HepG2 (cell line): ENCODE measurements at regions of chr4 and their contacts with region 1.

Region 1: GRCh38 chr4:189385098-189385497 is 555.6 kb upstream of the FRG1 start:
- DNase-seq: peak; percentile 79
- ATAC-seq: peak; percentile 77
- H3K4me3 ChIP-seq: no peak overlapping the region; a peak in 1 of 6 replicates
- H3K27ac ChIP-seq: peak overlapping the region; percentile 13
- H3K4me1 ChIP-seq: peaks cover 25% of the 10 kb centered on the region
- H3K27me3 ChIP-seq: no peaks in the 10 kb centered on the region
- CTCF ChIP-seq: no peak
- EP300 ChIP-seq: peak in 1 of 2 experiments; percentile 45; a peak in 2 of 4 replicates
- POLR2A ChIP-seq: no peak
- RAD21 ChIP-seq: no peak

Region 2: GRCh38 chr4:189255636-189256035 is 129.5 kb before region 1 on chr4:
- CTCF ChIA-PET with region 1: no interaction called
- POLR2A ChIA-PET with region 1: no interaction called
- in situ Hi-C with region 1: no loop called
- intact Hi-C with region 1: no loop called
- DNase-seq: no peak
- ATAC-seq: no peak
- H3K4me3 ChIP-seq: no peak overlapping the region
- H3K27ac ChIP-seq: no peak overlapping the region
- H3K4me1 ChIP-seq: no peaks in the 10 kb centered on the region
- H3K27me3 ChIP-seq: no peaks in the 10 kb centered on the region
- CTCF ChIP-seq: no peak
- EP300 ChIP-seq: no peak
- POLR2A ChIP-seq: no peak
- RAD21 ChIP-seq: no peak

Region 3: DNA sequence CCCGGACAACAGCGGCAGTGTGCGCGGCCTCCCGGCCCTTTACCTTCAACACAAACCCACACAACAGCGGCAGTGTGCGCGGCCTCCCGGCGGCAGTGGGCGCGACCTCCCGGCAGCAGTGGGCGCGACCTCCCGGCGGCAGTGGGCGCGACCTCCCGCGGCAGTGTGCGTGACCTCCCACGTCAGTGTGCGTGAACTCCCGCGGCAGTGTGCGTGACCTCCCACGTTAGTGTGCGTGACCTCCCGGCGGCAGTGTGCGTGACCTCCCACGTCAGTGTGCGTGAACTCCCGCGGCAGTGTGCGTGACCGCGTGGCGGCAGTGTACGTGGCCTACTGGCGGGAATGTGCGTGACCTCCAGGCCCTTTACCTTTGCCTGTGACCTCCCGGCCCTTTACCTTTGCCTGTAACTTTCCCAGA is 21.1 kb before region 1 on chr4:
- CTCF ChIA-PET with region 1: no interaction called
- POLR2A ChIA-PET with region 1: no interaction called
- in situ Hi-C with region 1: no loop called
- intact Hi-C with region 1: loop called (anchors 2 kb)
- DNase-seq: peak; percentile 56
- ATAC-seq: peak; percentile 99
- H3K4me3 ChIP-seq: peak overlapping the region in 2 of 3 experiments; percentile 58 to 64; a peak in 5 of 6 replicates
- H3K27ac ChIP-seq: peak overlapping the region; percentile 54
- H3K4me1 ChIP-seq: peaks cover 11% of the 10 kb centered on the region
- H3K27me3 ChIP-seq: no peaks in the 10 kb centered on the region
- CTCF ChIP-seq: peak; percentile 42; the same call in 1 of the 2 replicates
- EP300 ChIP-seq: no peak
- POLR2A ChIP-seq: peak; percentile 38 to 54; a peak in 2 of 4 replicates
- RAD21 ChIP-seq: no peak

Region 4: GRCh38 chr4:189396435-189396834 is 11.3 kb after region 1 on chr4:
- CTCF ChIA-PET with region 1: no interaction called
- POLR2A ChIA-PET with region 1: no interaction called
- in situ Hi-C with region 1: no loop called
- intact Hi-C with region 1: no loop called
- DNase-seq: no peak
- ATAC-seq: no peak
- H3K4me3 ChIP-seq: no peak overlapping the region
- H3K27ac ChIP-seq: no peak overlapping the region
- H3K4me1 ChIP-seq: no peaks in the 10 kb centered on the region
- H3K27me3 ChIP-seq: no peaks in the 10 kb centered on the region; a peak in 1 of 5 replicates
- CTCF ChIP-seq: no peak
- EP300 ChIP-seq: no peak
- POLR2A ChIP-seq: no peak
- RAD21 ChIP-seq: no peak